ENCODE measurements at regions of chr9 and their contacts with region 1.

Region 1: DNA sequence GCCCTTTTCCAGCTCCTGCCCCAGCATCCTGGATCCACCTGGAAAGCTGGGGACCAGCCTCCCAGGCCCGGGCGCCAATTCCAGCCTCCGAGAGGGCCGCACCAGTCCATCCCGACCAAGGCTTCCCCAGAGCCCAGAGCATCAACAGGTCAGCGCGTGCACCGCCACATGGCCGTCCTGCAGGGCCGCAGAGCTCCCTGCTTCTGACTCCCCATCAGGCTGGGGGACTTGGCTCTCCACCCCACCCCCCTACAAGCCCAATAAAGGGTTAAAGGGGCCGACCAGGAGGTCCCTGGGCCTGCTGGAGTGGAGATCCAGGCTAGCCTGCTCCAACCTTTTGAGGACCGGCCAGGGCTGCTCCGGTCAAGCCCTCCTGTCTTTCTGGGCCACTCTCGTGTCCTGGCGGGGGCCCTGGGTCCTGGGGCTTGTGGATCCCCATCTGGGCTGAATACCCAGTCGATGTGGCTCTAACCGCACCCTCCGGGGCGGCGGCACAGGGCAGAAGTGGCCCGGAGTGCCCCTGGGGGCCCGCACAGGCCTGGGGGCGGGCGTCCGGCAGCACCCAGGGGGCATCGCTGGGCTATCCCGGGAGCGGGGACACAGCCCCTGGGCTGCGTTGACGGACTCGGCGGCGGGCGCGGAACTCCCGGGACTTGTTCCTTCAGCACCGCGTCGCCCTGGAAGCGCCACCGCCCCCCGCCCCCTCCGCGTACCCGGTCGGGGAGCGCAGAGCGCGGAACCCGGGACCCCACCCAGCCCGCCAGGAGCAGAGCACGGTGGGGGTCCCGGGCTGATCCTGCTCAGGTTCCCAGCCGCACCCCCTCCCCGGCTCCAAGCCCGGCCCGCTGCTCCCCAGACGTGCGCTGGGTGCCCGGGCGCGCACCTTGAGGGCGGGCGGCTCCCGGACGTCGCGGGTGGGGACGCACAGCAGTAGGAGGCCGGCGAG is 590 bp downstream of the ENTPD2 start:
- DNase-seq: no peak
- H3K4me3 ChIP-seq: no peak overlapping the region
- H3K4me3 Mint-ChIP-seq: peak overlapping the region in 1 of 2 donors; percentile 74
- H3K27ac ChIP-seq: no peak overlapping the region
- H3K27ac Mint-ChIP-seq: no peak overlapping the region
- H3K4me1 ChIP-seq: peaks cover 0 to 10% of the 10 kb centered on the region in 2 donors
- H3K4me1 Mint-ChIP-seq: peaks cover 8% of the 10 kb centered on the region
- H3K27me3 ChIP-seq: peaks cover 17 to 66% of the 10 kb centered on the region in 2 donors
- H3K27me3 Mint-ChIP-seq: peaks cover 51 to 80% (median 64%) of the 10 kb centered on the region in 3 donors
- CTCF ChIP-seq: no peak

Region 2: GRCh38 chr9:136991993-136992818 is 61.1 kb before region 1 on chr9 and contains the start of gene PAXX:
- intact Hi-C with region 1: no loop called
- DNase-seq: peak; percentile 84 to 88 (median 84)
- H3K4me3 ChIP-seq: peak within 1 kb of the TSS; percentile 67 to 88 (median 85)
- H3K4me3 Mint-ChIP-seq: peak within 1 kb of the TSS; percentile 81 to 89
- H3K27ac ChIP-seq: peak within 1 kb of the TSS; percentile 64 to 79
- H3K27ac Mint-ChIP-seq: peak within 1 kb of the TSS; percentile 79 to 93 (median 89)
- H3K4me1 ChIP-seq: peaks cover 40 to 57% of the 10 kb centered on the region in 2 donors
- H3K4me1 Mint-ChIP-seq: peaks cover 40% of the 10 kb centered on the region
- H3K27me3 ChIP-seq: peaks cover 0 to 38% of the 10 kb centered on the region in 2 donors
- H3K27me3 Mint-ChIP-seq: peaks cover 29 to 55% (median 53%) of the 10 kb centered on the region in 3 donors
- CTCF ChIP-seq: no peak
- polyA plus RNA-seq, gene PAXX: 35.3 to 92.9 (median 40.7) TPM

Region 3: DNA sequence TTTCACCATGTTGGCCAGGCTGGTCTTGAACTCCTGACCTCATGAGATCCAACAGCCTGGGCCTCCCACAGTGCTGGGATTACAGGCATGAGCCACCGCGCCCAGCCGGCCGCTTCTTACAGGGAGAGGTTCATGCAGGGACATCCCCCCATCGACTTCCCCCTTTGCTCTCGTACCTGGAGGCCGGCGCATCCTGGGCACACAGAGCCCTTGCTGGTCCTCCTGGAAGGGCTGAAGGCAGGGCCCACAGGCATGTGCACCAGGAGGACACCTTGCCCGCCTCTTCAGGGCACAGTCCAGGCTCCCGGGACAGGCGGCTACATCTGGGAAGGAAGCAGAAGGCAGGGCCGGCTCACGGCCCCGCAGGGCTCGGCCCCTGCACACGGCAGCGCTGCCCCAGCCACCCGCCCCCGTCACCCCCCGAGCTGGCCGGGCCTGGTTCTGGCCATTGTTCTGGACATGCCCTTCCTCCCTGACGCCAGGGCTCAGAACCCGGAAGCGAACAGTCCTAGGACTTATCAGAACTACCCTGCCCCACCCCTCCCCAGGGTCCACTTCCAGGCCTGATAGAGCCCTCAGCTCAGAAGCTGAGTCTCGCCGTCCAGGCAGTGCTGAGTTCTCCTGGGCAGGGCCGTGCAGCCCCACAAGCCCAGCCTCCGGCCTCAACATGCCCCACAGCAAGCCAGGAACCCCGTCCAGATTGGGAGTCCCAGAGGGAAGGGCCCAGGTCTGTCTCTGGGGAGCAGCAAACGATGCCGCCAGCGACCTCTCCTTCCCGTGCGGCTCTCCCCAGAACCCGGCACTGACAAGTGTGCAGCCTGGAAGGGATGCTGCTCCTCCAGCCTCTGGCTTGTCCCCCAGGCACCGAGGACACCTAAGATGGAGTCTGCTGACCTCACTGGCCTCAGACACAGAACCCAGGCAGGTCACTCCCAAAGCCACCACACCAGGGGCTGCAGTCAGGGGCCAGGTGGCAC is 10.2 kb before region 1 on chr9:
- intact Hi-C with region 1: loop called in 1 of 2 experiments (anchors 1 kb)
- DNase-seq: no peak
- H3K4me3 ChIP-seq: no peak overlapping the region
- H3K4me3 Mint-ChIP-seq: peak overlapping the region in 1 of 2 donors; percentile 39
- H3K27ac ChIP-seq: no peak overlapping the region
- H3K27ac Mint-ChIP-seq: no peak overlapping the region
- H3K4me1 ChIP-seq: peaks cover 18 to 30% of the 10 kb centered on the region in 2 donors
- H3K4me1 Mint-ChIP-seq: peaks cover 13% of the 10 kb centered on the region
- H3K27me3 ChIP-seq: peaks cover 20 to 47% of the 10 kb centered on the region in 2 donors
- H3K27me3 Mint-ChIP-seq: peaks cover 40 to 52% (median 50%) of the 10 kb centered on the region in 3 donors
- CTCF ChIP-seq: no peak